Activated CD8-positive, alpha-beta T cell treated with anti-CD3 and anti-CD28 coated beads, Interleukin-2, amount 10 ng/mL, durations not matched to agents 7 days and 5 days (primary cell): ENCODE measurements at regions of chr5 and their contacts with region 1.

Region 1: GRCh38 chr5:177317959-177318377 is 6.3 kb upstream of the MXD3 start:
- DNase-seq: peak; percentile 84
- ATAC-seq: peak; percentile 67
- H3K4me3 Mint-ChIP-seq: no peak overlapping the region
- H3K27ac Mint-ChIP-seq: no peak overlapping the region
- H3K4me1 Mint-ChIP-seq: peaks cover 44% of the 10 kb centered on the region
- H3K27me3 Mint-ChIP-seq: no peaks in the 10 kb centered on the region

Region 2: GRCh38 chr5:177336112-177336511 is 18.1 kb after region 1 on chr5:
- CTCF ChIA-PET with region 1: interaction called, 11 read pairs
- POLR2A ChIA-PET with region 1: no interaction called
- DNase-seq: peak; percentile 48
- ATAC-seq: peak; percentile 77
- H3K4me3 Mint-ChIP-seq: no peak overlapping the region
- H3K27ac Mint-ChIP-seq: peak overlapping the region; percentile 57
- H3K4me1 Mint-ChIP-seq: peaks cover 50% of the 10 kb centered on the region
- H3K27me3 Mint-ChIP-seq: no peaks in the 10 kb centered on the region